Brain microvascular endothelial cell (primary cell): ENCODE measurements at regions of chr16 and their contacts with region 1.

Region 1: DNA sequence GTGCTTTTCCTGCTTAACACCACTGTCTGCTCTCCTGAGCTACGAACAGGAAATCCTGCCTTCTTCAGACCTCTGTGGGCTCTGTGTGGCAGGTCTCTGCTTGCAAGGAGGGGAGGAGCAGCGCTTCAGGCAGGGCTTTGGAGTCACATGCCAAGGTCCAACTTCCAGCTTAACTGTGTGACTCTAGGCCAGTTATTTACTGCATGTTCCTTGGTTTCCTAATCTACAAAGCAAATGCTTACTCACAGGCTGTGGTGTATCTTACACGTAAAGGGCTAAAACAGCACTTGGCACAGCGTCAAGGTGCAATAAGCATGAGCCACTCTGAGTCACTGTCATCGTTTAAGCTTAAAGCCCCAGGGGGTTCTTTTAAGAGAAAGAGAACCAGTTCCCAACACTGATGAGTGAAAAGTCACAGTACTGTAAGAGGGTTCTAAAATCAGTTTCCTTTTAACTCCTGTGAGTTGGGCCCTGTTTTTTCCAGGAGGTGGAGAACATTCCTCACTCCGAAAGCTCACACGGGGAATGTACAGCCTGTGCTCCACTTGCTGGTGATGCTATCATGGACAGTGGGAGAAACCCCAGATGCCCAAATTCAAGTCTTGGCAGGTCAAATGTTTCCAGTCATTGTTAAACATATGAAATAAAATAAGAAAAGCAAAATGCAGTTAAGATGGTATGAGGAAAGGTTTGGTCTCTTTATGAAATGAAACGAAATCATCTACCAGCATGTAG is 54.1 kb upstream of the BCAR1 start:
- DNase-seq: peak; percentile 100
- H3K4me3 ChIP-seq: no peak overlapping the region
- H3K27ac ChIP-seq: peak overlapping the region; percentile 96
- H3K27me3 ChIP-seq: no peaks in the 10 kb centered on the region
- CTCF ChIP-seq: no peak

Region 2: DNA sequence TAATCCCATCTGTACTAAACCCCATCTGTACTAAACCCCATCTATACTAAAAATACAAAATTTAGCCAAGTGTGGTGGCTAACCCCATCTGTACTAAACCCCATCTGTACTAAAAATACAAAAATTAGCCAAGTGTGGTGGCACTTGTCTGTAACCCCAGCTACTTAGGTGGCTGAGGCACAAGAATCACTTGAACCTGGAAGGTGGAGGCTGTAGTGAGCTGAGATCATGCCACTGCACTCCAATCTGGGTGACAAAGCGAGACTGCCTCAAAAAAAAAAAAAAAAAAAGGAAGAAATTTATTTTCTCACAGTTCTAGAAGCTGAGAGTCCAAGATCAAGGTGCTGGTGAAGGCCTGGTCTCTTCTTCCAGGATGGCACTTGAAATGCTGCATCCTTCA is 145.1 kb before region 1 on chr16:
- in situ Hi-C with region 1: no loop called
- DNase-seq: no peak
- H3K4me3 ChIP-seq: no peak overlapping the region
- H3K27ac ChIP-seq: no peak overlapping the region
- H3K27me3 ChIP-seq: no peaks in the 10 kb centered on the region
- CTCF ChIP-seq: no peak

Region 3: GRCh38 chr16:75385507-75386152 is 80.1 kb after region 1 on chr16:
- in situ Hi-C with region 1: loop called (anchors 5 kb)
- DNase-seq: peak; percentile 36
- H3K4me3 ChIP-seq: no peak overlapping the region
- H3K27ac ChIP-seq: peak overlapping the region; percentile 42
- H3K27me3 ChIP-seq: no peaks in the 10 kb centered on the region
- CTCF ChIP-seq: peak; percentile 46